ENCODE measurements at regions of chr3 and their contacts with region 1.

Region 1: DNA sequence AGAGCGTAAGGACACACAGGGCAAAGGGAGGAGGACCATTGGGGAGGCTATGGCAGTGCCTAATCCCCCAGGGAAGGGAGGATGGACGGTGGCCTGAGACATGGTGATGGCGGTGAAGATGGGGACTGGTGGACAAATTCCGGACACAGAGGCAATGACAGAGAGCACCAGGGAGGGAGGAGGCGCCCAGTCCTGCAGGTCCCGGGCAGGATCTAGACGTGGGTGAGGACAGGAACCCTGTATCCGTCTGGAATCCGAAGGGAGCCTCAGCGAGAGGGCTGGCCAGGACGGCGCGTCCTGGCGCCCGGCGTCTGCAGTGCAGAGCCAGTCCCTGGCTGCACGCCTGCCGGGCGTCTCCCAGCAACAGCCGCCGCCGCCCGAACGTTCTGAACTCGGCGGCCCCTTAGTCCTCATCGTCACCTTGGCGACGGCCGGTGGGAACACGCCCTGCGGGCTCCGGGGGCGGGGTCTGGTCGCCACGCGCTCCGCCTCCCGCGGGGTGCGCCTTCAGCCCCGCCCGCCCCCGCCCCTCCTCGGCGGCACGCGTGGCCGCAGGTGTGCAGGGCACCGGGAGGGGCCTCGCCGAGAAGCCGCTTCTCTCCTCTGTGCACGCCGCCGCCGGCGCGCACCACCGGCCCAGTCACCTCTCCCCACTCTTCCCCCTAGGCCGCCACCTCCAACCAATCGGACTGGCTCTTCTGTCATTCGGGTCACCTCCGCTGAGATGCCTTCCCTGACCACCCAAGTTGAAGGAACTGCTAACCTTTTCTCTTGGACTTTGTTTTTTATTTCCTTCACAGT is 11.6 kb downstream of the XIRP1 start:
- DNase-seq: peak; percentile 39
- ATAC-seq: peak; percentile 94
- H3K4me3 ChIP-seq: peak overlapping the region; percentile 61; the same call in 1 of the 2 replicates
- H3K27ac ChIP-seq: no peak overlapping the region
- H3K4me1 ChIP-seq: peaks cover 12% of the 10 kb centered on the region
- H3K27me3 ChIP-seq: no peaks in the 10 kb centered on the region
- CTCF ChIP-seq: no peak
- EP300 ChIP-seq: no peak
- POLR2A ChIP-seq: no peak
- RAD21 ChIP-seq: no peak

Region 2: GRCh38 chr3:39101022-39101689 is 79.6 kb before region 1 on chr3:
- CTCF ChIA-PET with region 1: interaction called, 5 read pairs
- POLR2A ChIA-PET with region 1: no interaction called
- RAD21 ChIA-PET with region 1: interaction called, 3 read pairs
- SMC1A ChIA-PET with region 1: interaction called, 8 read pairs
- in situ Hi-C with region 1: no loop called
- intact Hi-C with region 1: loop called (anchors 2 kb)
- DNase-seq: no peak
- ATAC-seq: peak; percentile 89
- H3K4me3 ChIP-seq: no peak overlapping the region
- H3K27ac ChIP-seq: no peak overlapping the region
- H3K4me1 ChIP-seq: peaks cover 5% of the 10 kb centered on the region
- H3K27me3 ChIP-seq: no peaks in the 10 kb centered on the region
- CTCF ChIP-seq: peak; percentile 72 to 84 (median 83)
- EP300 ChIP-seq: no peak
- POLR2A ChIP-seq: no peak
- RAD21 ChIP-seq: peak; percentile 85

Region 3: GRCh38 chr3:39146984-39147591 is 33.7 kb before region 1 on chr3:
- CTCF ChIA-PET with region 1: interaction called, 27 read pairs
- POLR2A ChIA-PET with region 1: interaction called, 3 read pairs
- RAD21 ChIA-PET with region 1: interaction called, 8 read pairs
- SMC1A ChIA-PET with region 1: interaction called, 12 read pairs
- in situ Hi-C with region 1: no loop called
- intact Hi-C with region 1: no loop called
- DNase-seq: no peak
- ATAC-seq: peak; percentile 38
- H3K4me3 ChIP-seq: peak overlapping the region; percentile 85
- H3K27ac ChIP-seq: peak overlapping the region; percentile 99
- H3K4me1 ChIP-seq: peaks cover 45% of the 10 kb centered on the region
- H3K27me3 ChIP-seq: no peaks in the 10 kb centered on the region
- CTCF ChIP-seq: no peak
- EP300 ChIP-seq: no peak
- POLR2A ChIP-seq: peak; percentile 57
- RAD21 ChIP-seq: no peak

Region 4: DNA sequence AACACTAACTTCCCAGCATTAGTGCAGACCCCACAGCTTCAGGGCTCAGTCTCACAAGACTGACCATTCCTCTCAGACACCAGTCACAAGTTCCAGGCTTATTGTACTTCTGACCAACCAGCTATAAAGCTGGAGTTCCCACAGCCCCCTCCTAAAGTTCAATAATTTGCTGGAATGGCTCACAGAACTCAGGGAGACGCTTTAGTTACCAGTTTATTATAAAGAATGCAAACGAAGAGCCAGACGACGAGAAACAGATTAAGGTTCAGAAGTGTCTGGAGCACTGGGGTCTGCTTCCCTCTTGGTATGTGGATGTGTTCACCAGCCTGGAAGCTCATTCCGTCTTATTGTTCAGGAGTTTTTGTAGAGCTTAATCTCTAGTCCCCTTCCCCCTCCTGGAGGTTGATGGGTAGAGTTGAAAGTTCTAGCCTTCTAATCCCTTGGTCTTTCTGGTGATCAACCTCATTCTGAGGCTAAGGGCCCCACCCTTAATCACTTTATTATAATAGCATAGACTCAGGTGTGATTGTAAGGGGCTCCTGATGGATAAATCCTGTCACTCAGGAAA is 22.5 kb before region 1 on chr3:
- CTCF ChIA-PET with region 1: interaction called, 3 read pairs
- POLR2A ChIA-PET with region 1: no interaction called
- RAD21 ChIA-PET with region 1: interaction called, 3 read pairs
- SMC1A ChIA-PET with region 1: interaction called, 11 read pairs
- in situ Hi-C with region 1: no loop called
- intact Hi-C with region 1: no loop called
- DNase-seq: no peak
- ATAC-seq: no peak
- H3K4me3 ChIP-seq: no peak overlapping the region
- H3K27ac ChIP-seq: no peak overlapping the region
- H3K4me1 ChIP-seq: no peaks in the 10 kb centered on the region
- H3K27me3 ChIP-seq: peaks cover 0 to 3% of the 10 kb centered on the region in 2 experiments; a peak in 1 of 4 replicates
- CTCF ChIP-seq: no peak
- EP300 ChIP-seq: no peak
- POLR2A ChIP-seq: no peak
- RAD21 ChIP-seq: no peak